H1 (cell line): ENCODE measurements at regions of chr18 and their contacts with region 1.

Region 1: DNA sequence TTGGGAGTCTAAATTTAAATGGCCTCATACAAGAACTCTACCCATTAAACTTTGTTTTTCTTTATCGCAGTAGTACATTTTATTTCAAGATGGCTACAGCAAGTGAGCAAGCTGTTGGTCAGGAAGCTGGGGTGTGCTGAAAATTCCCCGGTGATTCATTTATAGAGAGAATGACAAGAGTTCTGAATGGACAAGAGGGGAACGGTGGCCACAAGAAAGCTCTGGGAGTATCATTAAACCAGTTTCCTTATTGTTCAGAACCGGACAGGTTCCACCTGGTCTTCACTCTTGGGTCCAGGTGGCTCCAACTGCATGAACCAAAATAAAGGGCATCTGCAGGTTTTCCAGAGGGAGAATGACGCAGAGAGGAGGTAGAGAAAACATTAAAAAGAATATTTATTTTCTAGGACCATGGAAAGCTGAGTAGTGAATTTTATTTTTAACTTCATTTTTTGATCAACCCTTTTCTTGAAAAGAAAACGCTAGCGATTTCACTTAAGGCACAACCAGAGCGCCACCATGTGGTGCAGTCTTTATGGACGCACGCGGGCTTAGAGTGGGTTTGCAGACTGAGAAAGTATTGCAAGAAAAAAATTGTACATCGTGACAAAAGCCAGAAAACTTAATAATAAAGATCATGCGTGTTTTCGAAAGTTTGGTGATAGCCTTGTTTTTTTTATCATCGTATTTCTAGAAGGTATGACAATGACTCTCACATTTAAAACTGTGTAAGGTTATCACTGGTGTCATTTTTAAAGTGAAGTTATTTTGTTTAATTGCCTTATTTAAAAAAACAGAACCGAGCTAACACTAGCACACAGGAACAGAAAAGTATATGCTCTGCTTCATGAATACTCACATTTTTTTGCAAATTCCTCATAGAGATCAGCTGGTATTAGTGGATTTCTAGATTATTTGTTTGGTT is 97.9 kb upstream of the NOL4 start:
- DNase-seq: peak in 1 of 2 experiments; percentile 77
- H3K4me3 ChIP-seq: no peak overlapping the region
- H3K27ac ChIP-seq: no peak overlapping the region
- H3K4me1 ChIP-seq: no peaks in the 10 kb centered on the region
- H3K27me3 ChIP-seq: no peaks in the 10 kb centered on the region
- CTCF ChIP-seq: peak; percentile 74 to 87 (median 79)
- EP300 ChIP-seq: no peak
- POLR2A ChIP-seq: no peak
- RAD21 ChIP-seq: peak; percentile 92

Region 2: GRCh38 chr18:33839441-33840211 is 483.0 kb before region 1 on chr18:
- CTCF ChIA-PET with region 1: interaction called, 14 read pairs
- POLR2A ChIA-PET with region 1: no interaction called
- DNase-seq: no peak
- H3K4me3 ChIP-seq: peak overlapping the region in 1 of 4 experiments; percentile 9; a peak in 1 of 8 replicates
- H3K27ac ChIP-seq: no peak overlapping the region
- H3K4me1 ChIP-seq: peaks cover 0 to 7% (median 4%) of the 10 kb centered on the region in 4 experiments; a peak in 4 of 7 replicates
- H3K27me3 ChIP-seq: no peaks in the 10 kb centered on the region
- CTCF ChIP-seq: peak in 2 of 3 experiments; percentile 53 to 70; a peak in 2 of 4 replicates
- EP300 ChIP-seq: no peak
- POLR2A ChIP-seq: no peak
- RAD21 ChIP-seq: peak; percentile 76

Region 3: DNA sequence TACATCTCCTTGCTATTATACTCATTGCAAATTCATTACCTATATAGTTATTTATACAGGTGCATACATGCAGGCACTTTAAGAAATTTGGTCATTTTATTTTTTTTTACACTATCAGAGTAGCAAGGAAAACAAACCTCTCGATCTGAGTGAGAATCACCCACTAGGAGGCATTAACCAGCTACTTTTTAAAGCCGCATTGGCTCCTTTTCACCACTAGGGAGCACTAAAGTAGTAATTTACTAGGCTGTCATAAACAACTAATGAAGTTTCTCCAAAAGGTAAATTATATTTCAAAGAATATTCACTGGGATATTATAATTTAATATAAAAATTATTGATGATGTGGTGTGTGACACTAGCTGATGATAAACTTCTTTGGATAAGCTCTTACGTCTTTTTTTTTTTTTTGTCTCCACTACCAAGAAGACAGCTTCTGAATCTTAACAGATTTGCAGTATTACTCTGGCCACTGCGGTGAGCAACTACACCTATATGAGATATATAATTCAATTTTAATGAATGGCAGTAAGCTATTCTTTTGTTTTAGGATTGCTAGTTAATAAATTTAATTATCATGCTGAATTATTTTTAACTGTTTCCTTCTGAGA is 199.8 kb before region 1 on chr18:
- CTCF ChIA-PET with region 1: interaction called, 81 read pairs
- POLR2A ChIA-PET with region 1: no interaction called
- DNase-seq: no peak
- H3K4me3 ChIP-seq: no peak overlapping the region
- H3K27ac ChIP-seq: no peak overlapping the region
- H3K4me1 ChIP-seq: no peaks in the 10 kb centered on the region
- H3K27me3 ChIP-seq: peaks cover 0 to 2% (median 0%) of the 10 kb centered on the region in 4 experiments; a peak in 4 of 7 replicates
- CTCF ChIP-seq: peak in 2 of 3 experiments; percentile 81 to 99; a peak in 3 of 4 replicates
- EP300 ChIP-seq: no peak
- POLR2A ChIP-seq: no peak
- RAD21 ChIP-seq: peak; percentile 87

Region 4: DNA sequence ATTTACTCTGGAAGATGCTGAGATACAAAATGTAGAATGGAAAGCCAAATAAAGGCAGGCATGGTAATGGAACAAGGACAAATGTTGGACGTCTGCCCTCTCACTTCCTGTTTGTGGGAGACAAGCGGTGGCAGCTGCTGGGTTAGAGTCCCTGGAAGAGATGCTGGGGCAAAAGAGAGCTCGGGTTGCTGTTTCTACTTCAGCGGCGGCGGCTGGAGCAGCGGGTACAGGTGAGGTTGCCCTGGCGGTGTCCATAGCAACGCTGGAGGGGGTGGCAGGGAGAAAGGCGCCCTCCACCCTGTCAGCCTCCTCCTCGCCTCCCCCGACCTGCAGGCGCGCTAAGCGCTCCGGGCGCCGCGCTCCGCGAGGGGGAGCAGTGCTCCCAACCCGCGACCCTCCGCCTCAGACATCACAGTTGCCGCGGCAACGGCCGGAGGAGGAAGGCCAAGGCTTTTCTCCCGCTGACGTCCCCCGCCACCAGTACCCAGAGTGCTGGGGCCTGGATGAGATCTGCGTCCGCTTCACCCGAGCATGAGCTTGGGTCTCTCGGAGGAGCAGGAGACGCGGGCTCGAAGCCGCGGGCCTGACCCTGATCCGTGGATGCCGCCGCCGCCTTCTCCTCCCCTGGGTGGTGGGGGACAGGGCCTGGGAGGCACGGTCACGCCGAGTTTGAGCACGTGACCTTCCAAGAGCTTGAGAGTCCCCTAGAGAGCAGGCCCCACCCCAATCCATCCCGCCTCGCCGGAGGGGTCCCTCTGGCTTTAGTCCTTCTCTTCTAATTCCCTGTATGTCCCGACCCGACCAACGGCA is 163.5 kb before region 1 on chr18:
- CTCF ChIA-PET with region 1: interaction called, 19 read pairs
- POLR2A ChIA-PET with region 1: no interaction called
- DNase-seq: peak; percentile 74 to 85
- H3K4me3 ChIP-seq: peak overlapping the region; percentile 34 to 62 (median 50)
- H3K27ac ChIP-seq: no peak overlapping the region
- H3K4me1 ChIP-seq: peaks cover 0 to 3% (median 1%) of the 10 kb centered on the region in 4 experiments; a peak in 4 of 7 replicates
- H3K27me3 ChIP-seq: peaks cover 0 to 5% (median 0%) of the 10 kb centered on the region in 4 experiments; a peak in 2 of 7 replicates
- CTCF ChIP-seq: peak; percentile 50 to 65 (median 64)
- EP300 ChIP-seq: no peak
- POLR2A ChIP-seq: 0 out of 3 replicates have a peak, but pooled peaks of 1 of the 2 experiments have one; percentile 38
- RAD21 ChIP-seq: peak; percentile 40 to 55; a peak in 3 of 4 replicates

Region 5: GRCh38 chr18:34224423-34225217 is 98.0 kb before region 1 on chr18 and contains the start of gene NOL4:
- CTCF ChIA-PET with region 1: interaction called, 19 read pairs
- POLR2A ChIA-PET with region 1: no interaction called
- DNase-seq: peak; percentile 93 to 98
- H3K4me3 ChIP-seq: peak within 1 kb of the TSS; percentile 49 to 73 (median 62)
- H3K27ac ChIP-seq: no peak within 1 kb of the TSS
- H3K4me1 ChIP-seq: peaks cover 3 to 6% (median 4%) of the 10 kb centered on the region in 4 experiments; a peak in 6 of 7 replicates
- H3K27me3 ChIP-seq: peaks cover 8 to 41% (median 26%) of the 10 kb centered on the region in 4 experiments; a peak in 6 of 7 replicates
- CTCF ChIP-seq: peak; percentile 79 to 98 (median 95)
- EP300 ChIP-seq: peak in 1 of 2 experiments; percentile 72; a peak in 1 of 3 replicates
- POLR2A ChIP-seq: no peak
- RAD21 ChIP-seq: peak; percentile 71 to 75
- total RNA-seq, gene NOL4: 1.6 and 2.6 TPM in 2 replicates

Region 6: GRCh38 chr18:34299828-34300227 is 22.8 kb before region 1 on chr18:
- CTCF ChIA-PET with region 1: interaction called, 14 read pairs
- POLR2A ChIA-PET with region 1: no interaction called
- DNase-seq: no peak
- H3K4me3 ChIP-seq: no peak overlapping the region
- H3K27ac ChIP-seq: no peak overlapping the region
- H3K4me1 ChIP-seq: no peaks in the 10 kb centered on the region
- H3K27me3 ChIP-seq: no peaks in the 10 kb centered on the region
- CTCF ChIP-seq: no peak
- EP300 ChIP-seq: no peak
- POLR2A ChIP-seq: no peak
- RAD21 ChIP-seq: no peak

Region 7: DNA sequence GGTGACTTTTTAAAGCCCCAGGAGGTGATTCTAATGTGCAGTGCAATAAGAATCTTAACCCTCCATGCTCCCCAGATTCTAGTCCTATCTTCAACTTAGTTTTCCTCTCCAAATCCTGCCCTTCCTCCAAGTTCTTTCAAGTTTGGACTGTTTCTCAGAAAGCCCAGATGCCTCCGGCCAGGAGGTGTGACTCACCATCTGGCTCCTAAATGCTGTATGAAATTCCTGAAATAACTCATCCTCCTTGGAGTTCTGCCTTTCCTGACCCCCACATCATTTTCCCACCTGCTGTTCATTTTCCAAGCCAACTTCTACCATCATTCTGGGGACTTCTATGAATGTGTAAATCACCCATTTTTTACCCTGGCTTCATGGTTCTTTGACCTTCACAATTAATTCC is 20.3 kb after region 1 on chr18:
- CTCF ChIA-PET with region 1: no interaction called
- POLR2A ChIA-PET with region 1: no interaction called
- DNase-seq: no peak
- H3K4me3 ChIP-seq: no peak overlapping the region
- H3K27ac ChIP-seq: no peak overlapping the region
- H3K4me1 ChIP-seq: no peaks in the 10 kb centered on the region
- H3K27me3 ChIP-seq: no peaks in the 10 kb centered on the region
- CTCF ChIP-seq: no peak
- EP300 ChIP-seq: no peak
- POLR2A ChIP-seq: no peak
- RAD21 ChIP-seq: no peak